ENCODE measurements at regions of chr2 and their contacts with region 1.

Region 1: GRCh38 chr2:47437287-47437686 is 34.3 kb downstream of the MSH2 start:
- DNase-seq: no peak
- H3K4me3 ChIP-seq: no peak overlapping the region
- H3K4me1 ChIP-seq: no peaks in the 10 kb centered on the region
- H3K27me3 ChIP-seq: no peaks in the 10 kb centered on the region

Region 2: DNA sequence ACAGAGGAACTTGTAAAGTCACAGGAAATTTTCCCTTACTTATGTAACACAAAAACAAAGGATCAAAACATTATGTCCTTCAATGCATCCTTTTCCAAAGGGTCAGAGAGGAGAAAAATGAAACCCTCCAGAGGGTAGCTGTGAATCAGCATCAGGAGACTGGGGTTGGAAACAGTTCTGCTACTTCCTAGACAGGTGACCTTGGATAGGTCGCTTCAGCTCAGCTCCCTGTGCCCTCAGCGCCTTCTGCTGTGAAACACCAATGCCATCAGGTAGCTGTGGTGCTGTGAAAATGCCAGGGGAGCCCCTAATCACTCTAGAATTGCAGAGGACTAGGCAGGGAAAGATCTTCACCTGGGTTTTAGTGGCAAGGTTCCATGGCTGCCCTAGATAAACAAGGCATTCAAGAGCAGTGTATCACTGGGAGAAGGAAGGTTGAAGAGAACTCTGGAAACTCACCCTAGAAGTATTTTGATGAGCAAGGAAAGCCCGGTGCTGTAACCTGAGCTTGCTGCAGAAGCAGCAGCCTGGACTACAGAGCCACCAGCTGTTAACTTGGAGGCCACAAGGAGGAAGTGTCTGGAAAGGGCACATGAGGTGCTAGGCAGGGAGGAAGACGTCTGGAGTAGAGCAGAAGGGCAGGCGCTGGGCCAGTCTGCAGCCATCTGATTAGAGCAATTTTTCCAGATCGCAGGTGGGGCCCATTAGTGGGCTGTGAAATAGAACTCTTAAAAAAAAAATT is 420.9 kb before region 1 on chr2:
- in situ Hi-C with region 1: no loop called
- DNase-seq: no peak
- H3K4me3 ChIP-seq: no peak overlapping the region
- H3K4me1 ChIP-seq: no peaks in the 10 kb centered on the region
- H3K27me3 ChIP-seq: no peaks in the 10 kb centered on the region

Region 3: GRCh38 chr2:47767880-47768609 is 330.8 kb after region 1 on chr2:
- in situ Hi-C with region 1: loop called (anchors 10 kb)
- DNase-seq: peak; percentile 11 to 83
- H3K4me3 ChIP-seq: no peak overlapping the region
- H3K4me1 ChIP-seq: no peaks in the 10 kb centered on the region
- H3K27me3 ChIP-seq: no peaks in the 10 kb centered on the region

Measured in HAP-1 (cell line).